GM10248 (cell line): ENCODE measurements at regions of chr1 and their contacts with region 1.

Region 1: DNA sequence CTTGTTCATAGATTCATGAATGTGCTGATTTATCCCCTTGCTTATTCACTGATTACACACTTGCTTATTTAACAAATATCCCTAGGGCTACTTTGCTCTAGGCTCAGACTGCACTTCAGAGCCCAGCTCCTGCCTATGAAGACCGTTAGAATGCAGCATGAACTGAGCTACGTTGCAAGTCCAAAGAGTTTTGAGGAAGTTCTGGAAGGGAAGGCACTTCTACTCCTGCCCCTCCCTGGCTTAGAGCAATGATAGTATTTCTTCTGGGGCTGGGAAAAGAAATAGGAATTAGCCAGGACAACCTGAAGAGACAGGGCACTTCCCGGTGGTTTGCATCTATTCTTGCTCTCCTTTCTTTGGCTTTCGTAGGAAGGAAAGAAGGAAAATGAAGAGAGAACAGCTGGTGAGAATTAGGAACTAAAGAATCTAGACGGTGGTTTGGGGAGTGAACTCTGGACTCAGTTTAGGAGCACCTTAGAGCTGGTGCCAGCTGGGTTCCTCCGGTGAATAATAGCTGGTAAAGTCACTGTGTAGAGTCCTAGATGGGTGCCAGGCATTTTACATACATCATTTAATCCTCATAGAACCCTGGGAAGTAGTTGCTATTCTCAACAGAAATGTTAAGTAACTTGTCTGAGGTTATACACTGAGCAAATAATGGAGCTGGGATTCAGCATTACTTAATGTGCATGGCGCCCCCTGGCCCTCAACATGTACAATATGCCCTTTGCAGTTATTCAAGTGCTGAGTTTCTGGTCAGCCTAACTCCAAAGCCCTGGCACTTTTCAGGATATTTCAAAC is 65.9 kb downstream of the NDUFS5 start:
- DNase-seq: no peak
- CTCF ChIP-seq: peak; percentile 78

Region 2: GRCh38 chr1:39061951-39062350 is 30.1 kb before region 1 on chr1:
- CTCF ChIA-PET with region 1: no interaction called
- POLR2A ChIA-PET with region 1: no interaction called
- DNase-seq: no peak
- CTCF ChIP-seq: no peak

Region 3: GRCh38 chr1:39076127-39076798 is 15.8 kb before region 1 on chr1:
- CTCF ChIA-PET with region 1: interaction called, 10 read pairs
- POLR2A ChIA-PET with region 1: no interaction called
- DNase-seq: no peak
- CTCF ChIP-seq: no peak